IMR-90 (cell line): ENCODE measurements at regions of chr15 and their contacts with region 1.

Region 1: GRCh38 chr15:48062148-48062861 is 58.5 kb upstream of the SLC24A5 start:
- DNase-seq: peak; percentile 61
- ATAC-seq: peak; percentile 85
- H3K4me3 ChIP-seq: no peak overlapping the region
- H3K27ac ChIP-seq: no peak overlapping the region
- H3K4me1 ChIP-seq: peaks cover 3% of the 10 kb centered on the region; the same call in 1 of the 2 replicates
- H3K27me3 ChIP-seq: no peaks in the 10 kb centered on the region
- CTCF ChIP-seq: no peak
- POLR2A ChIP-seq: no peak
- RAD21 ChIP-seq: no peak

Region 2: GRCh38 chr15:47987908-47988532 is 74.3 kb before region 1 on chr15:
- CTCF ChIA-PET with region 1: no interaction called
- POLR2A ChIA-PET with region 1: no interaction called
- dilution Hi-C with region 1: no loop called
- in situ Hi-C with region 1: no loop called
- intact Hi-C with region 1: no loop called
- DNase-seq: peak; percentile 70
- ATAC-seq: peak; percentile 99
- H3K4me3 ChIP-seq: no peak overlapping the region
- H3K27ac ChIP-seq: no peak overlapping the region
- H3K4me1 ChIP-seq: no peaks in the 10 kb centered on the region
- H3K27me3 ChIP-seq: no peaks in the 10 kb centered on the region; the same call in 1 of the 2 replicates
- CTCF ChIP-seq: peak; percentile 88
- POLR2A ChIP-seq: no peak
- RAD21 ChIP-seq: peak; percentile 90

Region 3: GRCh38 chr15:48001393-48002039 is 60.8 kb before region 1 on chr15:
- CTCF ChIA-PET with region 1: no interaction called
- POLR2A ChIA-PET with region 1: no interaction called
- dilution Hi-C with region 1: no loop called
- in situ Hi-C with region 1: loop called (anchors 10 kb)
- intact Hi-C with region 1: no loop called
- DNase-seq: no peak
- ATAC-seq: no peak
- H3K4me3 ChIP-seq: no peak overlapping the region
- H3K27ac ChIP-seq: no peak overlapping the region
- H3K4me1 ChIP-seq: no peaks in the 10 kb centered on the region
- H3K27me3 ChIP-seq: peaks cover 2% of the 10 kb centered on the region
- CTCF ChIP-seq: no peak
- POLR2A ChIP-seq: no peak
- RAD21 ChIP-seq: no peak

Region 4: DNA sequence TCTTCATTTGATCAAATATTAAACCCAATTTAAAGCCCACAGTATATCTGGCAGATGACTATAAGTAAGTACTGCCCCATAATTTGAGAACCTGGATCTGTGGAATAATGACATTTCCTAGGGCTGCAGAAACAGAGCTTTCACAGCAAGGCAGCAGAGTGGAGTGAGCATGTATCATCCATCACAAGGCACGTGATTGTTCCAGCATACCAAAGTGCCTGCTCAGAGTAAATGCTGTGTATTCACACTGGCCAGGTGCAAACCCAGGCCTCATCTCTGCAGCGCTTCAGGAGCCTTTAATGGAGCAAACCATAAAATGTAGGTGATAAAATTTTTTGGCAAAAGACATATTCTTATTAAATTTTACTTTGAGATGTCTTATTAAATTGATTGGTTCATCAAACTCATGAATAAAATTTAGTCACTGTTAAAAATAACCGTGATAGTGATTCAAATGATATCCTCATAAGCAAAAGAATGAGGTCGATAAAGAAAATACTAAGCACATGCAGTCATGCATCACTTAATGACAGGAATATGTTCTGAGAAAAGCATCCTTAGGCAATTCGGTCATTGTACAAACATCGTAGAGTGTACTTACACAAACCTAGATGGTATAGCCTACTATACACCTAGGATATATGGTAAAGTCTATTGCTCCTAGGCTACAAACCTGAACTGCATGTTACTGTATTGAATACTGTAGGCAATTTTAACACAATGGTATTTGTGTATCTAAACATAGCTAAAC is 40.8 kb before region 1 on chr15:
- CTCF ChIA-PET with region 1: no interaction called
- POLR2A ChIA-PET with region 1: no interaction called
- dilution Hi-C with region 1: no loop called
- in situ Hi-C with region 1: no loop called
- intact Hi-C with region 1: no loop called
- DNase-seq: peak; percentile 4
- ATAC-seq: no peak
- H3K4me3 ChIP-seq: no peak overlapping the region
- H3K27ac ChIP-seq: no peak overlapping the region
- H3K4me1 ChIP-seq: no peaks in the 10 kb centered on the region
- H3K27me3 ChIP-seq: peaks cover 3% of the 10 kb centered on the region; the same call in 1 of the 2 replicates
- CTCF ChIP-seq: no peak
- POLR2A ChIP-seq: no peak
- RAD21 ChIP-seq: no peak